ENCODE measurements at regions of chr21 and their contacts with region 1.

Region 1: GRCh38 chr21:29018540-29018939 is 609 bp downstream of the RWDD2B start:
- DNase-seq: no peak

Region 2: DNA sequence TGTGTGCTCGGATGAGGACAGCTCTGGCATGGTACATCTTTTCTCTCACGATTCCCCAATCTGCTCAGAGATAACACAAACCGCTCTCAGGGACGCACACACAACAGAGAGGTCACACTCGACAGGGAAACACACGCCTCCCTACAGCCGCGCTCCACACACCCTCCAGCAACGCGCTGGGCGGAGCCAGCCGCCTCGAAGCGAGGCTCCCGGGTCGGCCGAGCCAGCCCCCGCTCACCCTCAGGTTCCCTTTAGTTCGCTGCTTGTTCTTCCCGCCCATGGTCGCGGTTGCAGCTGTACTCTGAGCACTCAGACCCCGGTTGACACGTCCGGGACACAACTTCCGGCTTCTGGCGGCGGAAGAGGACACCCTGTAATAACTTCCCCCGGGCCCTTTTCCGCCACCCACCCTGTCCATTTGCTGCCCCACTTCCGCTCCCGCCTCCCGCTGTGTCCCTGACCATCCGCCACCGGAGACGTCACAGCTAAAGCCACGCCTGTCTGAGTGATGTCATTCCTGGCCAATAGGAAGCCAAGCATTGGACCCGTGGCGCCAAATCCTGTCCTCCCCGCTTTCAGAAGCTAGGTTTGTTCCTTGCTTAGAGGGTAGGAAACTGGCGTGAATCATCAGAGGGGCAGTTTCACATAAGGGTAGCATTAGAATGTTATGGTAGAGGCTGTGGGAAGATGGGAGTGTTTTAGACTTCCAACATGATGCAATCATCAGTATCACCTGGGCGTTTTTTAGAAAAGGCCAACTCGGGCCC is 25.8 kb before region 1 on chr21 and contains the start of gene LTN1:
- CTCF ChIA-PET with region 1: no interaction called
- POLR2A ChIA-PET with region 1: interaction called, 45 read pairs
- DNase-seq: peak; percentile 98

Region 3: GRCh38 chr21:29056005-29056404 is 37.5 kb after region 1 on chr21:
- CTCF ChIA-PET with region 1: no interaction called
- POLR2A ChIA-PET with region 1: no interaction called
- DNase-seq: no peak